ENCODE measurements at regions of chr15 and their contacts with region 1.

Region 1: GRCh38 chr15:101489236-101489632 is 273 bp downstream of the PCSK6 start:
- DNase-seq: peak in 4 of 7 donors; percentile 30 to 45 (median 40)
- H3K4me3 ChIP-seq: peak overlapping the region in 1 of 4 donors; percentile 47
- H3K27ac ChIP-seq: no peak overlapping the region
- H3K4me1 ChIP-seq: no peaks in the 10 kb centered on the region
- H3K27me3 ChIP-seq: peaks cover 8% of the 10 kb centered on the region
- CTCF ChIP-seq: peak in 1 of 6 experiments; percentile 11
- POLR2A ChIP-seq: no peak

Region 2: DNA sequence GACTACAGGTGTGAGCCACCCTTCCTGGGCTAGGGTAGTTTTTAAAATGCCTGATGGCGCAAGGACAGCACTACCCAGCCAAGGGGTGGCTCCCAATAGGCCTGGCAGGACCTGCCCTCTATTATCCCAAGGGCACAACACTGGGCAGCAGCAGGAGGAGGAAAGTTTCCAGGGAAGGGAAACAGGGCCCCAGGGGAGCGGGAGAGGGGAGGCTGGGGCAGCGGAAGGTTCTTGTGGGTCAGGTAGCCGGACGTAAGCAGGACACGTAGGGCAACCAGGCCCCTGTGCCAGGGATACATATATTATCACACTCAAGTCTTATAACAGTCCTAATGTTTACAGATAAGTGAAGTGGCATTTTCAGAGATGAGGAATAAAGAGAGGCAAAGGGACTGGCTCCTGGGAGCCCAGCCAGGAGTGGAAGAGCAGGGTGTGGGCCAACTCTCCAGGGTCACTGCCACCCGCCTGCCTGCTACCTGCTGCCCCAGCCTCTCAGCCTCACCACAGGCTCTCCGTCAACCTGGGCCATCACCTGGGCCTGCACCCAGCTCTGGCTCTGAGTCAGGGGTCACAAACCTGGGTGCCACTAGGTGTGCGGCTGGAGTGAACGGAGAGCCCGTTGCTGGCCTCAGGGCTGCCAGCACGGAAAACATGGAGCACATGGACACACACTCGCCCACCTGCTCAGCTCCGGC is 121.0 kb before region 1 on chr15:
- intact Hi-C with region 1: loop called in 1 of 2 experiments (anchors 10 kb)
- DNase-seq: peak; percentile 24 to 59 (median 49)
- H3K4me3 ChIP-seq: no peak overlapping the region
- H3K27ac ChIP-seq: peak overlapping the region in 1 of 5 donors; percentile 15
- H3K4me1 ChIP-seq: peaks cover 0 to 6% of the 10 kb centered on the region in 2 donors
- H3K27me3 ChIP-seq: no peaks in the 10 kb centered on the region
- CTCF ChIP-seq: no peak
- POLR2A ChIP-seq: no peak

Region 3: DNA sequence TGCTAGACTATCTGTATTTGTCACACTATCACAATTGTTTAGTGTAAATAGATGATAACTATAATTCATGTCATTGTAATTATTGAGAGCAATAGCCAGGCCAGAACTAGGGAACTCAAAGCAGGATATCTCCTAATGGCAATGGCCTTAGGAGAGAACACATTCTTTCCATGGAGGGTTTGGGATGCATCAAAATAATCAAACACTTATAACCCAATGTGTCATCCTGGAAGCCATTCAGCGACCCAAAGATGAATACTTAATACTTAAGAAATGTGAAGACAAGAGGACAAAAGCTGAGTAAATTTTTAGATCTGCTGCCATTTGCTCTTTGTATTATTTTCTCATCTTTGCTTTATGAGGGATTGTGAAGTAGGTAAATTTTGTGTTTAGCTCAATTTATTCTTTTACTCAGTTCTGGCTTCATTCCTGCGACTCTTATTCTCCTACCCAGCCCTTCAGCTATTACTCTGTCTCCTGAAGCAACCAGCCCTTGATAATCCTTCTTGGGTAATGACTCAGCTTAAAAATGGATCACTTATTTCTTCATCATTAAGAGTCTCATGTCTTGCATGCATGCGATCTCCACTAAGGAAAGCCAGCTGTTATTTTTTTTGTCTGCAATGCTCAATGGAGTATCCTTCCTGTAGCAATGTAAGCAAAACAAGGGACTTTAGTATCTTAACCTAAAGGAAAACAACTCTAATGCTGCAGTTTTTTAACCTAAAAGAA is 324.7 kb after region 1 on chr15:
- intact Hi-C with region 1: no loop called
- DNase-seq: no peak
- H3K4me3 ChIP-seq: no peak overlapping the region
- H3K27ac ChIP-seq: no peak overlapping the region
- H3K4me1 ChIP-seq: no peaks in the 10 kb centered on the region
- H3K27me3 ChIP-seq: no peaks in the 10 kb centered on the region
- CTCF ChIP-seq: no peak
- POLR2A ChIP-seq: no peak